Dorsolateral prefrontal cortex (tissue), 120 donors: ENCODE measurements at regions of chr20 and their contacts with region 1.

Region 1: GRCh38 chr20:7094438-7094997 is 327.0 kb downstream of the BMP2 start:
- DNase-seq: peak in 3 of 10 donors; percentile 5 to 47 (median 43)
- H3K4me3 ChIP-seq: no peak overlapping the region
- H3K27ac ChIP-seq: no peak overlapping the region
- H3K27me3 ChIP-seq: peaks cover 0 to 3% (median 0%) of the 10 kb centered on the region in 45 donors
- CTCF ChIP-seq: peak; percentile 14 to 73 (median 58)

Region 2: DNA sequence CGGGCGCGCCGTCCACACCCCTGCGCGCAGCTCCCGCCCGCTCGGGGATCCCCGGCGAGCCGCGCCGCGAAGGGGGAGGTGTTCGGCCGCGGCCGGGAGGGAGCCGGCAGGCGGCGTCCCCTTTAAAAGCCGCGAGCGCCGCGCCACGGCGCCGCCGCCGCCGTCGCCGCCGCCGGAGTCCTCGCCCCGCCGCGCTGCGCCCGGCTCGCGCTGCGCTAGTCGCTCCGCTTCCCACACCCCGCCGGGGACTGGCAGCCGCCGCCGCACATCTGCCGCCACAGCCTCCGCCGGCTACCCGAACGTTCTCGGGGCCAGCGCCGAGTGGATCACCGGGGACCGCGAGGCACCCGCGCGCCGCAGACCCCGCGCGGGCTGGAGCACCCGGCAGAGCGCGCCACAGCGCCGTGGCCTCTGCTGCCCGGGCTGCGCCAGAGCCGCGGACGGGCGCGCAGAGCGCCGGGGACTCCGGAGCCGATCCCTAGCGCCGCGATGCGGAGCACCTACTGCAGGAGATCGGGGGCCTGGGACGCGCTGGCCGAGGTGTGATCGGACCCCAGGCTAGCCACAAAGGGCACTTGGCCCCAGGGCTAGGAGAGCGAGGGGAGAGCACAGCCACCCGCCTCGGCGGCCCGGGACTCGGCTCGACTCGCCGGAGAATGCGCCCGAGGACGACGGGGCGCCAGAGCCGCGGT is 326.8 kb before region 1 on chr20 and contains the start of gene BMP2:
- intact Hi-C with region 1: loop called in 1 of 2 experiments (anchors 10 kb)
- DNase-seq: peak in 7 of 10 donors; percentile 40 to 79 (median 46)
- H3K4me3 ChIP-seq: peak within 1 kb of the TSS; percentile 59 to 90 (median 75)
- H3K27ac ChIP-seq: peak within 1 kb of the TSS in 51 of 59 donors; percentile 23 to 88 (median 72)
- H3K27me3 ChIP-seq: peaks cover 0 to 3% (median 0%) of the 10 kb centered on the region in 45 donors
- CTCF ChIP-seq: peak in 16 of 56 donors; percentile 1 to 23 (median 12)
- total RNA-seq, gene BMP2: 1.6 to 8.8 (median 3.1) TPM

Region 3: GRCh38 chr20:6828794-6829423 is 265.6 kb before region 1 on chr20:
- intact Hi-C with region 1: loop called in 1 of 2 experiments (anchors 10 kb)
- DNase-seq: peak in 8 of 10 donors; percentile 25 to 75 (median 52)
- H3K4me3 ChIP-seq: no peak overlapping the region
- H3K27ac ChIP-seq: no peak overlapping the region
- H3K27me3 ChIP-seq: peaks cover 0 to 6% (median 0%) of the 10 kb centered on the region in 45 donors
- CTCF ChIP-seq: peak; percentile 52 to 87 (median 76)